MCF 10A (cell line): ENCODE measurements at regions of chr10 and their contacts with region 1.

Region 1: GRCh38 chr10:95430231-95430951 is 130.8 kb downstream of the SORBS1 start:
- DNase-seq: peak; percentile 73
- H3K4me3 Mint-ChIP-seq: no peak overlapping the region
- H3K27ac Mint-ChIP-seq: no peak overlapping the region
- H3K4me1 Mint-ChIP-seq: peaks cover 11% of the 10 kb centered on the region
- H3K27me3 Mint-ChIP-seq: peaks cover 7% of the 10 kb centered on the region
- CTCF ChIP-seq: peak; percentile 89

Region 2: GRCh38 chr10:95388539-95388938 is 41.9 kb before region 1 on chr10:
- CTCF ChIA-PET with region 1: interaction called, 16 read pairs
- POLR2A ChIA-PET with region 1: no interaction called
- intact Hi-C with region 1: no loop called
- DNase-seq: no peak
- H3K4me3 Mint-ChIP-seq: no peak overlapping the region
- H3K27ac Mint-ChIP-seq: no peak overlapping the region
- H3K4me1 Mint-ChIP-seq: peaks cover 1% of the 10 kb centered on the region
- H3K27me3 Mint-ChIP-seq: no peaks in the 10 kb centered on the region
- CTCF ChIP-seq: no peak

Region 3: DNA sequence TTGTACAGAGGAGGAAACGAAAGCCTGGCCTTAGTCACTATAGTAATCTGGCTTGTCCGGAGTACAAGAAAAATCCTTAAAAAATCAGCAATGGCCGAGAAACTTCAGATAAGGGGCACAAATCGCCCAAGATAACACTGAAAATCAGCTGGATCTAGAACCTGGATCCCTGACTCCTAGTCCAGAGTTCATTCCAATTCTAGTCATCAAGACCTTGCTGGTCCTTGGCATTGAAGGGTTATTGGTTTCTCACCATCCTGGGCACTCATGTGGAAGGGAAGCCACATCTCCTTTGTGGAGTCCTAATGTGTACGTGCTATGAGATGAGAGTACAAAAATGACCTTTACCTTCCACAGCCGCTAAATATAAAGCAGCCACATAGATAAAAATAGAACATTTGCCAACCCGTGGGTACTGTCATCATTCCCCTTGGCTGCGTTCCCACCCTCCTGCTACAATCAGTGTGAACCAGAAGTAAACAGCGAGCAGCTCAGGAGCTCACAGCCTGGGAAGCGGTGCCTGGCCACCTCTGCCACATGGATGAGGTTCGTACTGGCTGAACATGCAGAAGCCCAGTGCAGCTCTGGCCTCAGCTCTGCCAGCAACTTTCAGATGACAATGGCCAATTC is 23.6 kb before region 1 on chr10:
- CTCF ChIA-PET with region 1: interaction called, 27 read pairs
- POLR2A ChIA-PET with region 1: interaction called, 3 read pairs
- intact Hi-C with region 1: no loop called
- DNase-seq: peak; percentile 88
- H3K4me3 Mint-ChIP-seq: no peak overlapping the region
- H3K27ac Mint-ChIP-seq: no peak overlapping the region
- H3K4me1 Mint-ChIP-seq: peaks cover 10% of the 10 kb centered on the region
- H3K27me3 Mint-ChIP-seq: no peaks in the 10 kb centered on the region
- CTCF ChIP-seq: no peak

Region 4: DNA sequence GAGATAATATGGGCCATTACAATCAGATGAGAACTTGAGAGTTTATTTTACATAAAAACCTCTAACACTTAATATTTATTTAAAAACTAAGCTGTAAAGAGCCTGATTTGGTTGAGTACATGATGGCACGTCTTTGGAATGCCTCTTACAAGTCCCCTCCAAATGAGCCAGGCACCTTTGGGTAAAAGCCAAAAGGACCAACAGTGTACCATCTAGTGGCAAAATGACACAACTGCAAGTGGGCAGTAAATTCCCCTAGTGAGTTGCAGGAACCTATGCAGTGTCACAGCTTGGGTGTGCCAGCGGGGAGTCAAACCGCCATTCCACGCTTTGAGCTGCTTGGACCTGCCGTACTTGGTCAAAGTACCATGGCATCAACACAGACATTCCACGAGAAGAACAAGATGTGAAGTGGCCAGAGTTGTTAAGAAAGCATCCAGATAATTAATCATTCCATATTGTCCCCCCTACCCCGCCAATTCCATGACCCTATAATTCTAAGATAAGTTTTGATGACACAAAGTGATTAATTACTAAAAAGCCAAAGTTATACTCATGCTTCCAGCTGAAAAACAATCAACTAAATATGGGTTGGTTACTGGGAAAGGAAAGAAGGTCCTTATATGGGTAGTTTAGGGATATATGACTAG is 15.6 kb after region 1 on chr10:
- CTCF ChIA-PET with region 1: interaction called, 178 read pairs
- POLR2A ChIA-PET with region 1: no interaction called
- intact Hi-C with region 1: loop called (anchors 1 kb)
- DNase-seq: peak; percentile 82
- H3K4me3 Mint-ChIP-seq: no peak overlapping the region
- H3K27ac Mint-ChIP-seq: no peak overlapping the region
- H3K4me1 Mint-ChIP-seq: peaks cover 15% of the 10 kb centered on the region
- H3K27me3 Mint-ChIP-seq: no peaks in the 10 kb centered on the region
- CTCF ChIP-seq: peak; percentile 81

Region 5: DNA sequence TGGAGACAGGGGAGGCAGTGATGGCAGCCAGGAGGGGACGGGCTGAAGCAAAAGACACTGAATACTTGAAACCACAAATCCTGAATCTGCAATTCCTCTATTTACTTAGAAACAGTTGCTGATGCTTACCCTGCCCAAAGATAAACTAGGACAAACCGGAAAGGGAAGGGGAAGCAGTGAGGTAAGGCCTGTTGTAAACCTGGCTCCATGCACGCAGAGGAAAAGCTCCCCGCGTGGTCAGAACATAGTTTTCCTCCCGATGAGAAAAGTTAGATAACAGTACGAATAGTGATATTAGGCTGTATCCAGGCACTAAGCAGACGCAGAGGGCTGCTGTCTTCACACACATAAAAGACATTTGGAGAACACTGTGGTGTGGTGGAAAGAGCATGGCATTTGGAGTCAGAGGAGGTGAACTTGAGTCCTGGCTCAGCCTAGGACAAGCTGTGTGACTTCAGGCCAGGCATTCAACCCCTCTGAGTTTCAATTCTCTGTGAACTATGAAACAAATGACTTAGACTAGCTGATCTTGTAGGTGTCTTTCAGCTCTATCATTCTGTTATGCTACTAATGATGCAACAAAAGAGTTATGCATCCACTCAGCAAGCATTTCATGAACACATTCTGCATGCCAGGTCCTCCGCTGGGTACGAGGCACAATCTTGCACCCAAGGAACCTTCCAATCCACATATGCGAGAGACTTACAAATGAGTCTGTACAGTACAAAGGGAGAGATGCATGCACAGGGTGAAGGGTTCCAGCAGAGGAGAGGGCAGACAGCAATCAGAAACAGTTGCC is 49.9 kb after region 1 on chr10:
- CTCF ChIA-PET with region 1: interaction called, 17 read pairs
- POLR2A ChIA-PET with region 1: interaction called, 3 read pairs
- intact Hi-C with region 1: no loop called
- DNase-seq: no peak
- H3K4me3 Mint-ChIP-seq: no peak overlapping the region
- H3K27ac Mint-ChIP-seq: no peak overlapping the region
- H3K4me1 Mint-ChIP-seq: peaks cover 6% of the 10 kb centered on the region
- H3K27me3 Mint-ChIP-seq: no peaks in the 10 kb centered on the region
- CTCF ChIP-seq: no peak

Region 6: GRCh38 chr10:95579835-95580535 is 149.6 kb after region 1 on chr10:
- CTCF ChIA-PET with region 1: interaction called, 24 read pairs
- POLR2A ChIA-PET with region 1: no interaction called
- intact Hi-C with region 1: no loop called
- DNase-seq: no peak
- H3K4me3 Mint-ChIP-seq: no peak overlapping the region
- H3K27ac Mint-ChIP-seq: no peak overlapping the region
- H3K4me1 Mint-ChIP-seq: peaks cover 6% of the 10 kb centered on the region
- H3K27me3 Mint-ChIP-seq: peaks cover 51% of the 10 kb centered on the region
- CTCF ChIP-seq: no peak

Region 7: DNA sequence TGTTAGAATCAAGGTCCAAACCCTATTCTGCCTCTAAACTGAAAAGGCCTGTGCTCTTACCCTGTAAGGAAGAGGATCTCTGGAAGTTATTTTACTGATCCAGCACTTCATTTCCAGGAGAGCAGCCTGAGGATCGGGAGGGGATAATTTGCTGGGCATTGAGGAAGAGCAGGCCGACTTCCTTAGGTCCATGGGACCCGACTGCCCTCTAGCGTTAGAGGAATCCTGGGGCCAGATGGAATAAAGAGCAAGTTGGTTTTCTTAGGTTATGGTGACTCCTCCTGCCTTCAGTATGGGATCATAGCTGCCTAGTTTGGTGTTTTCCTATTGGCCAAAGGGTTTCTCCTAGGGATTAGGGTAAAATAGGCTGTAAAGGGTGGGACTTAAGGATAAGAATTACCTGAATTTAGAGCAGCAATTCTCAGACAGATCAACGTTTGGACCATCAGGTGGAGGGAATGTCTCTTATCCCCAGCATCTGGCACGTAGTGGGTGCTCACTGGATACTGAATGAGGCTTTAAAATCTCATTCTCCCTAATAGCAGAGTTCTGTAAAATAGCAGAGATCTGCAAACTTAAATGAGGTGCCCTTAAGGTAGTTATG is 170.8 kb after region 1 on chr10:
- CTCF ChIA-PET with region 1: interaction called, 239 read pairs
- POLR2A ChIA-PET with region 1: interaction called, 4 read pairs
- intact Hi-C with region 1: loop called (anchors 1 kb)
- DNase-seq: peak; percentile 89
- H3K4me3 Mint-ChIP-seq: no peak overlapping the region
- H3K27ac Mint-ChIP-seq: no peak overlapping the region
- H3K4me1 Mint-ChIP-seq: no peaks in the 10 kb centered on the region
- H3K27me3 Mint-ChIP-seq: peaks cover 21% of the 10 kb centered on the region
- CTCF ChIP-seq: peak; percentile 87